Caco-2 (cell line): ENCODE measurements at regions of chr10 and their contacts with region 1.

Region 1: DNA sequence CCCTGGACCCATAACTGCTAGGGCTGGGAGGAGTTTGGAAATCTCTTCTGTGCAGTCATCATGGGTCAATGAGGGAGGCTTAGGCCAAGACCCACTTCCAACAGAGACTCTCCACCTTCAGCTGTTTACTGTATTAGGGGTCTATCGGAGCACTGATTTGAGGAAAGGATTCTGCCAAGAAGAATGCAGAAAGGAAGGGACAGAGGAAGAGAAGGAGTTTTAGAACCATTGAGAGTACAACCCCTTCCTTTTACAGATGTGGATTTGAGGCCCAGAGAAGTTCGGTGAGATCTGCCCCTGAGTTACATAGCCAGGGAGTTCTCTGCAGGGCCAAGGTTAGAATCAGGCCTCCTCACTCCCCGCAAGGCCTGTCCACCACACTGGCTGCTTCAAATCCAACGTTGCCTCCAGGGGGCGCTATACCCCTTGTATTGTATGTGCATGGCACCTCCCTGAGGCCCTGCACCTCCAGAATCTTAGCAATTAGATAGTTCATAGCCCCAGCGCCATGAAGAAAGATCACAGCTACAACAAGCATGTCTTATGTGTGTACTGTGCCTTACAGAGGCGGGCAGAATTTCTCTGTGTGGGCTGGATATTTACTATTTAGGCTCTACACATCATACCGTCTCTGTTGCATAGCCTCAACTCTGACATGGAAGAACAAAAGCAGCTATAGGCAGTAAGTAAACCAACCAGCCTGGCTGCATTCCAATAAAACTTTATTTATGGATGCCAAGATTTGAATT is 246.8 kb downstream of the SKIDA1 start:
- DNase-seq: peak; percentile 96 to 97
- H3K4me3 ChIP-seq: no peak overlapping the region
- H3K4me3 Mint-ChIP-seq: no peak overlapping the region
- H3K27ac Mint-ChIP-seq: peak overlapping the region; percentile 50
- H3K4me1 ChIP-seq: peaks cover 29% of the 10 kb centered on the region
- H3K4me1 Mint-ChIP-seq: peaks cover 34% of the 10 kb centered on the region
- H3K27me3 ChIP-seq: no peaks in the 10 kb centered on the region
- H3K27me3 Mint-ChIP-seq: no peaks in the 10 kb centered on the region
- CTCF ChIP-seq: peak; percentile 89 to 95

Region 2: DNA sequence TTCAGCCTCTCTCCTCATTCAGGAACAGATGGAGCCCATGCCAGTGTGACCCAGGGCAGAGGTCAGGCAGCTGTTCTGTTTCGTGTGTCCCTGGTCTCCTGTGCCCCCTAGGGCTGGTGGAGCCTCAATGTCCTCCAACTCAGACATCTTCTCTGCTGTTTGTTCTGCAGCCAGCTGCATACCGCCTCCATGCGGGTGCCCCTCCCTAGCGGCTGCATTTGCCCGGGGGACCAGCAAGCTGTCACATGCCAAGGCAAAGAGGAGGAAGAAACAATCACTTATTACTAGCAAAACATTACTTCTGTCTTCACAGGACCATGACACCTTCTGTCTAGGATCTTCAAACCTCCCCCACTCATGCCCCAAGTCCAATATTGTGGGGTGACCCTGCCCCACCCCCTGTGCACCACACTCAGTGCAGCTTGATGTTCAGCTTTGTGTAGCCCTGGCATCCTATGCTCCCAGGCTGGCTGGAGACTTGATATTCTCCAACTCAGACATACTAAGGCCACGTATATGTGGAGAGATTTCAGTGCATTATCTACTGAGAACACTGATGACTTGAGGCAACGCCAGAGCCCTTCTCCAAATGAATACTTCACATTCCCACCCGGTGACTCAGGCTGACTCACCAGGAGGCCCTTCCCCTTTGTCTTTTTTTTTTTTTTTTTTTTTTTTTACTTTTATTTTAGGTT is 58.0 kb after region 1 on chr10:
- CTCF ChIA-PET with region 1: interaction called, 3 read pairs
- POLR2A ChIA-PET with region 1: no interaction called
- intact Hi-C with region 1: loop called (anchors 1 kb)
- DNase-seq: peak; percentile 90 to 94
- H3K4me3 ChIP-seq: no peak overlapping the region
- H3K4me3 Mint-ChIP-seq: peak overlapping the region; percentile 30
- H3K27ac Mint-ChIP-seq: peak overlapping the region; percentile 91
- H3K4me1 ChIP-seq: peaks cover 47% of the 10 kb centered on the region
- H3K4me1 Mint-ChIP-seq: peaks cover 31% of the 10 kb centered on the region
- H3K27me3 ChIP-seq: no peaks in the 10 kb centered on the region
- H3K27me3 Mint-ChIP-seq: no peaks in the 10 kb centered on the region
- CTCF ChIP-seq: peak; percentile 11 to 19

Region 3: GRCh38 chr10:21525367-21526183 is 246.9 kb after region 1 on chr10 and contains the start of gene SKIDA1:
- CTCF ChIA-PET with region 1: interaction called, 8 read pairs
- POLR2A ChIA-PET with region 1: no interaction called
- intact Hi-C with region 1: loop called (anchors 2 kb)
- DNase-seq: peak; percentile 96 to 97
- H3K4me3 ChIP-seq: peak within 1 kb of the TSS; percentile 70
- H3K4me3 Mint-ChIP-seq: peak within 1 kb of the TSS; percentile 88
- H3K27ac Mint-ChIP-seq: peak within 1 kb of the TSS; percentile 98
- H3K4me1 ChIP-seq: peaks cover 30% of the 10 kb centered on the region
- H3K4me1 Mint-ChIP-seq: peaks cover 31% of the 10 kb centered on the region
- H3K27me3 ChIP-seq: no peaks in the 10 kb centered on the region
- H3K27me3 Mint-ChIP-seq: no peaks in the 10 kb centered on the region
- CTCF ChIP-seq: no peak
- total RNA-seq, gene SKIDA1: 5.7 and 6.3 TPM in 2 replicates

Region 4: DNA sequence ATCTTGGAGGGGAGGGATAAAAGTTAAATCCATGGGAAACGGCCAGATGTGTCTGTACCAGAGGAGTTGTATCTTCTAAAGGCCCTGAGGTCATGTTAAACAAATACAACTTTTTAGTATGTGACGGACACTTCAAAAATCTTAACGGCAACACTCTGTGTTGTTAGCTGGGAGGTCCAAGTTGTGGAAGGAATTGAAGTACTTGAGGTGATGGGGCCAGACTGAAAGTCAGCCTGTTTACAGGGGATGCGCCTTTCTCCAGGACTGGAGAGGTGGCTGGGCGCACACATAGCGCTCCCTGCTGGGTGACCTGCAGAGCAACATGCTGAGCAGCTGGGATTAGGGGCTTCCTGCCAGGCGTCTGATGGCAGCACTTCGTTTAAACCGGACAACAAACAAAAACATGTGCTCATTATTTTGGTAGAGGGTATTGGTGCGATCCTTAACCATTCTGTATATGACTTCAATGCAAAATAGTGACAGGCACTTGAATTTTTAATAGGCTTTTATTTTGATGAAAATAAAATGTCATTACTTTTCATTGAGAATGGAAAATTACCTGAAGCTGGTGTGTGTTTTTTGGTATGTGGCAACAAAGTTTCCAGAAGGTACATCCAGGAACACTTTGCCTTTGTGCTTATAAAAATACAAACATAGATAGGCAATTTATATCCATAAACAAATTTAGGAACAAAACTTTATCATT is 453.6 kb after region 1 on chr10:
- CTCF ChIA-PET with region 1: no interaction called
- POLR2A ChIA-PET with region 1: no interaction called
- intact Hi-C with region 1: loop called (anchors 2 kb)
- DNase-seq: peak; percentile 72
- H3K4me3 ChIP-seq: no peak overlapping the region
- H3K4me3 Mint-ChIP-seq: no peak overlapping the region
- H3K27ac Mint-ChIP-seq: no peak overlapping the region
- H3K4me1 ChIP-seq: peaks cover 8% of the 10 kb centered on the region
- H3K4me1 Mint-ChIP-seq: peaks cover 13% of the 10 kb centered on the region
- H3K27me3 ChIP-seq: no peaks in the 10 kb centered on the region
- H3K27me3 Mint-ChIP-seq: no peaks in the 10 kb centered on the region
- CTCF ChIP-seq: peak; percentile 85 to 87